ENCODE measurements at regions of chr17 and their contacts with region 1.

Region 1: DNA sequence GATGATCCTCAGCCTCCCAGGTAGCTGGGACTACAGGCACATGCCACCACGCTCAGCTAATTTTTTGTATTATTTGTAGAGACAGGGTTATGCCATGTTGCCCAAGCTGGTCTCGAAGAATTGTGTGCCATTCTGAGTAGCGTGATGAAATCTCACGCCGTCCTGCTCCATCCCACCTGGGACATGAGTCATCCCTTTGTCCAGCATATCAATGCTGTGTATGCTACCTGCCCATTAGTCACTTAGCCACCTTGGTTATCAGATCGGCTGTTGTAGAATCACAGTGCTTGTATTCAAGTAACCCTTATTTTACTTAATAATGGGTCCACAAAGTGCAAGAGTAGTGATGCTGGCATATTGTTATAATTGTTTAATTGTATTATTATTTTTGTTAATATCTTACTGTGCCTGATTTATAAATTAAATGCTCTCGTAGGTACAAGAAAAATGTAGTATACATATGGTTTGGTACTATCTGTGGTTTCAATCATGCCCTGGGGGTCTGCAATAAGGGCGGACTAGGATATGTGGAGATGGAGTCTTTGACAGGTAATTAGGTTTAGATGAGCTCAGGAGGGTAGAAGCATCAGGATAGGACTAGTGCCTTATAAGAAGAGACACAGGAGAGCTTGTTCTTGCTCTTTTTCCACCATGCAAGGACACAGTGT is 26.6 kb upstream of the SLC13A2 start:
- DNase-seq: peak; percentile 54 to 88
- H3K4me3 ChIP-seq: no peak overlapping the region
- H3K27ac ChIP-seq: no peak overlapping the region
- H3K4me1 ChIP-seq: peaks cover 5% of the 10 kb centered on the region; the same call in 1 of the 2 replicates
- H3K27me3 ChIP-seq: no peaks in the 10 kb centered on the region
- CTCF ChIP-seq: no peak

Region 2: GRCh38 chr17:27473748-27474609 is 972.9 kb before region 1 on chr17:
- CTCF ChIA-PET with region 1: no interaction called
- POLR2A ChIA-PET with region 1: interaction called, 15 read pairs
- intact Hi-C with region 1: no loop called
- DNase-seq: peak in 1 of 2 experiments; percentile 17
- H3K4me3 ChIP-seq: no peak overlapping the region
- H3K27ac ChIP-seq: peak overlapping the region; percentile 95
- H3K4me1 ChIP-seq: peaks cover 41% of the 10 kb centered on the region
- H3K27me3 ChIP-seq: no peaks in the 10 kb centered on the region
- CTCF ChIP-seq: no peak

Region 3: DNA sequence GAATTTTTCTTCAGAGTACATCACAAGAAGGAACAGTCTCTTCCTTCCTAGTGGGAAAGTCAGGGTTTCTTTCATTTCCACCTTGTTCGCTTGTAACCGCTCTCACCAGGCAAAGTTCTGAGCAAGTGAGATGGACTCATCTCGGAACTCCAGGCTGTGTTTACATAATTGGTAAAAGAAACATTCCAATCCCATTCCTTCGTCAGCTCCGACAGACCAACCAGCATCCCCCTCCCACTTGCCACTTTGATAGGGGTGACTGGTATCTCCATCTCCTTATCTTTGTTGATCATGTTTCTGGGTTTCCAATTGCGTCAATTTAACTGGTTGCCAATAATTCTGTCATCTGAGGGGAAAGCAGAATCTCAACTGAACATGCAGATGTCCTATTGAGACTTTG is 516.9 kb before region 1 on chr17:
- CTCF ChIA-PET with region 1: no interaction called
- POLR2A ChIA-PET with region 1: interaction called, 10 read pairs
- intact Hi-C with region 1: no loop called
- DNase-seq: no peak
- H3K4me3 ChIP-seq: no peak overlapping the region
- H3K27ac ChIP-seq: no peak overlapping the region
- H3K4me1 ChIP-seq: no peaks in the 10 kb centered on the region
- H3K27me3 ChIP-seq: peaks cover 42% of the 10 kb centered on the region
- CTCF ChIP-seq: no peak

Region 4: DNA sequence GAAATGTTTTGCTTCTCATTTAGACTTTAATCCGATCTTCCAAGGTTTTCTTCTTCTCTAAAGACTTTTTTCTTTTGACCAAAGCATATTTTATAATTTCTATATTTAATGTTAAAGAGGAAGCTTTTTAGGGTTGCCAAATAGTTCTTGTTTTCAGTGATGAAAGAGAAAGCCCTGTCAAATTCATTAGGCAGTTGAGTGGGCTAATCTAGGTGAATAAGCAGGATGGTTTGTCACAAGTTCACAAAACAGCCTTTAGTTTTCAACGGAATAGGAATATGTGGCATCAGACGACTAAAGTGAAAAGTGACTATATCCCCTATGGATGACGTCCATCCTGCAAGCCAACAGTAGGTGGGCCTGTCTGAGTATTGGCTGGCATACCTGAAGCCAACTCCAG is 285.6 kb before region 1 on chr17:
- CTCF ChIA-PET with region 1: no interaction called
- POLR2A ChIA-PET with region 1: interaction called, 48 read pairs
- intact Hi-C with region 1: no loop called
- DNase-seq: no peak
- H3K4me3 ChIP-seq: no peak overlapping the region
- H3K27ac ChIP-seq: no peak overlapping the region
- H3K4me1 ChIP-seq: no peaks in the 10 kb centered on the region
- H3K27me3 ChIP-seq: no peaks in the 10 kb centered on the region
- CTCF ChIP-seq: no peak

Region 5: DNA sequence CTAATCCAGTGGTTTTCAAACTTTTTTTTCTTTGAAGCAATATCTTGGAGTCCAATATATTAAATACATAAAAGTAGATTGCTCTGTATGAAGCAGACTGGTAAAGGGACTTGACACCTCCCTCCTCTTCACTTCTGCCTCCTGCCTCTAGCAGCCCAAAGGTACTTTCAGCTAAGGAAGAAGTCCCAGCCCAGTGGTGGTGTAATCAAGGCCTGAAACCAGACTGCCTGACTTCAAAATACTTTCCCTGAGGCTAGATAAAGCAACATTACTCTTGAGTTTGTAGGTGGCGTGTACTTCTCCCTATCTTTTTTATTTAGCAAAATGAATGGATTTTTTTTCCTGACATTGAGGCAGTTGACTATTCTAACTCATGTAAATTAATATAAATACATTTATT is 250.2 kb before region 1 on chr17:
- CTCF ChIA-PET with region 1: no interaction called
- POLR2A ChIA-PET with region 1: no interaction called
- intact Hi-C with region 1: no loop called
- DNase-seq: no peak
- H3K4me3 ChIP-seq: no peak overlapping the region
- H3K27ac ChIP-seq: no peak overlapping the region
- H3K4me1 ChIP-seq: no peaks in the 10 kb centered on the region
- H3K27me3 ChIP-seq: no peaks in the 10 kb centered on the region
- CTCF ChIP-seq: no peak

Measured in PC-9 (cell line).